HEK293T (cell line): ENCODE measurements at regions of chr15 and their contacts with region 1.

Region 1: DNA sequence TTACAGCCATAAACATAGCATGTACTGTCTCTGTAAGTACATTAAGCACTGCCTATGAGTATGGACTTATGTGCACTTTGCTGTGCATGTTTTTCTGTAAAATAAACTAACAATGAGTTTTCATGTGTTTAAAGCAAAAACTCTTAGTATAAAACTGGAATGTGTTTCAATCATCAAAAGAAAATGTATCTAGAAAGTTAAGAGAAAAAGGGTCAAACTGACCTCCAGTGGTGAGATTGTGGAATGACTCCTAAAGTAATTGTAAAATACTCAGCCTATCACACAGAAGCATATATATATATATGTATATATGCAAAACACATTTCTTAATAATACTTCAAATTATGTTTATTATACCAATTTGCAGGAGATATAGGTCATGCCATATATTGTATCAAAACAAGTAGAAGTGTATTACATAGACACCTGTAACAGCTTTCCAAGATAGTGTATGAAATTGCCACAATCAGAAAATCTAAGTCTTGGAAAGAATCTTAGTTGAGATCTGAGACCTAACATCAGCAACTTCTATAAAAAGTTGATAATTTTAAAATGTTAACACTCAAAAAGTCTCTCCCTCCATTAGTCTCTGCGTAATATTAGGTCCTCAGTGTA is 199.6 kb downstream of the FMN1 start:
- DNase-seq: peak; percentile 8

Region 2: GRCh38 chr15:32663671-32664070 is 331.2 kb before region 1 on chr15:
- CTCF ChIA-PET with region 1: interaction called, 20 read pairs
- POLR2A ChIA-PET with region 1: no interaction called
- DNase-seq: no peak